B cell (primary cell): ENCODE measurements at regions of chrX and their contacts with region 1.

Region 1: GRCh38 chrX:23901805-23902204 is 5.9 kb downstream of the APOO start:
- DNase-seq: peak; percentile 70
- ATAC-seq: peak; percentile 78
- H3K4me3 ChIP-seq: no peak overlapping the region
- H3K4me3 Mint-ChIP-seq: no peak overlapping the region
- H3K27ac ChIP-seq: peak overlapping the region in 1 of 2 donors; percentile 14
- H3K27ac Mint-ChIP-seq: no peak overlapping the region
- H3K4me1 ChIP-seq: peaks cover 6 to 12% of the 10 kb centered on the region in 2 donors
- H3K4me1 Mint-ChIP-seq: peaks cover 6% of the 10 kb centered on the region
- H3K27me3 ChIP-seq: no peaks in the 10 kb centered on the region
- H3K27me3 Mint-ChIP-seq: no peaks in the 10 kb centered on the region
- CTCF ChIP-seq: no peak

Region 2: GRCh38 chrX:23667239-23668177 is 234.3 kb before region 1 on chrX and contains the start of gene PRDX4:
- CTCF ChIA-PET with region 1: interaction called, 12 read pairs
- POLR2A ChIA-PET with region 1: no interaction called
- intact Hi-C with region 1: loop called (anchors 10 kb)
- DNase-seq: peak; percentile 83
- ATAC-seq: peak; percentile 91
- H3K4me3 ChIP-seq: peak within 1 kb of the TSS; percentile 21 to 66 (median 64)
- H3K4me3 Mint-ChIP-seq: peak within 1 kb of the TSS; percentile 91
- H3K27ac ChIP-seq: peak within 1 kb of the TSS; percentile 77 to 82
- H3K27ac Mint-ChIP-seq: peak within 1 kb of the TSS; percentile 94
- H3K4me1 ChIP-seq: peaks cover 7 to 15% of the 10 kb centered on the region in 2 donors
- H3K4me1 Mint-ChIP-seq: peaks cover 20% of the 10 kb centered on the region
- H3K27me3 ChIP-seq: no peaks in the 10 kb centered on the region
- H3K27me3 Mint-ChIP-seq: no peaks in the 10 kb centered on the region
- CTCF ChIP-seq: no peak
- total RNA-seq, gene PRDX4: 10.6 and 12.8 TPM in 2 replicates

Region 3: DNA sequence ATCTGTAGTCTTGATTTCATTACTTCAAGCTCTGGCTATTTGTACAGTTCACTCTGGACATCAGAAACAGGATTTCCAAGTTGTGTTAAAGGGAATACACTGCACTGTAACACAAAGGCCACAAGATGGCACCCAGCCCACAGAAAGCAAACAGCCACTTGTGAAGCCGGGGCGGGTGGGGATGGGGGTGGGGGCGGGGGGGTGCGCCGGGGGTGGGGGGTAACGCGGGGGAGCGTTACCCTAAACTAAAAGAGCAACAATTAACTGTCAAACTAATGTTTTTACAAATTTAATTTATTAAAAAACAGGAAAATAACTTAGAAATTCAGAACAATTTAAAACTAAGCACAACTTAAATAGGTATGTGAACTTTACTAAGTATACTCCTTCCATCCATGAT is 207.2 kb before region 1 on chrX:
- CTCF ChIA-PET with region 1: interaction called, 91 read pairs
- POLR2A ChIA-PET with region 1: no interaction called
- intact Hi-C with region 1: no loop called
- DNase-seq: peak; percentile 56
- ATAC-seq: peak; percentile 56
- H3K4me3 ChIP-seq: no peak overlapping the region
- H3K4me3 Mint-ChIP-seq: no peak overlapping the region
- H3K27ac ChIP-seq: no peak overlapping the region
- H3K27ac Mint-ChIP-seq: no peak overlapping the region
- H3K4me1 ChIP-seq: no peaks in the 10 kb centered on the region
- H3K4me1 Mint-ChIP-seq: peaks cover 6% of the 10 kb centered on the region
- H3K27me3 ChIP-seq: no peaks in the 10 kb centered on the region
- H3K27me3 Mint-ChIP-seq: no peaks in the 10 kb centered on the region
- CTCF ChIP-seq: peak; percentile 65

Region 4: DNA sequence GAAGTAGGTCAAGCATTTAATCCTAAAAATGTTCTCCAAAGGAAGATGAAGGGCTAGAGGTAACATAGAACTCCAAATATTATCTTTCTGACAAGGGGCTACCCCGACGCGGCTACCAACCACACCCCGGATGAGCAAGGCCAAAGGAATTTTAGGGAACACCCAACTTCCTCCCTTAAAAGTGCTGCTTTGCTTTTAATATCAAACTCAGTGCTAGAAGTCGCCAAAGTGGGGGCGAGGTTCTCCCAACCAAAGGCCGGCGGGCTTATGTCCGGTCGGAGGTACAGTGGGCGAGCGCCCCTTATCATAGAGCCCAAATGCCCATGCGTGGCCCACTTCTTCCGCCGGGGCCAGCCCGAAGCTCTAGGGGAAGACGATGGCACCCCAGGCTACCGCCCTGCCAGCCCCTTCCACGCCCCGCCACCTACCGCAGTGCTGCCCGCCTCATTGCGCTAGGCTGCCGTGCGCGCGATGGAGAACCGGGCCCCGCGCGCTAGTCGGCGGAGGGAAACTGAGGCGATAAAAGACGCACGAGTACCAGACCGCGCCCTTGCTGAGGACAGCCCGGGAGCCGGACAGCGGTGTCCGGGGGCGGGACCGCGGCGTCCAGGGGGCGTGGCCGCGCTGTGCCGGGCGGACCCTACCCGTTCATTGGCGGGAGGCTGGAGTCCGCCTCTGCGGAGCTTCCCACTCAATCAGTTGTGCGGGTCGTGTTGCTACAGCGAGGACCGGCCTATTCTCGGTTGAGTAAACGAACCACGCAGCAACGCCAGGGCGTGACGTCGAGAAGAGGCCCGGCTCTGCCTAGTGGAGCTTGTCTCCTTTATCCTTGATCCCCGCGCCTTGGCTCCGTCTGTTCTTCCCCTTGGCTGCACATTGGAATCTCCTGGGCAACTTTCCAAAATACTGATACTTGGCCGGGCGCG is 158.8 kb before region 1 on chrX and contains the start of gene ACOT9:
- CTCF ChIA-PET with region 1: interaction called, 5 read pairs
- POLR2A ChIA-PET with region 1: no interaction called
- intact Hi-C with region 1: loop called (anchors 5 kb)
- DNase-seq: peak; percentile 86
- ATAC-seq: peak; percentile 95
- H3K4me3 ChIP-seq: peak within 1 kb of the TSS; percentile 36 to 80 (median 75)
- H3K4me3 Mint-ChIP-seq: peak within 1 kb of the TSS; percentile 91
- H3K27ac ChIP-seq: peak within 1 kb of the TSS; percentile 86 to 87
- H3K27ac Mint-ChIP-seq: peak within 1 kb of the TSS; percentile 90
- H3K4me1 ChIP-seq: peaks cover 3 to 12% of the 10 kb centered on the region in 2 donors
- H3K4me1 Mint-ChIP-seq: peaks cover 31% of the 10 kb centered on the region
- H3K27me3 ChIP-seq: no peaks in the 10 kb centered on the region
- H3K27me3 Mint-ChIP-seq: no peaks in the 10 kb centered on the region
- CTCF ChIP-seq: no peak
- total RNA-seq, gene ACOT9: 31.3 and 33.6 TPM in 2 replicates

Region 5: DNA sequence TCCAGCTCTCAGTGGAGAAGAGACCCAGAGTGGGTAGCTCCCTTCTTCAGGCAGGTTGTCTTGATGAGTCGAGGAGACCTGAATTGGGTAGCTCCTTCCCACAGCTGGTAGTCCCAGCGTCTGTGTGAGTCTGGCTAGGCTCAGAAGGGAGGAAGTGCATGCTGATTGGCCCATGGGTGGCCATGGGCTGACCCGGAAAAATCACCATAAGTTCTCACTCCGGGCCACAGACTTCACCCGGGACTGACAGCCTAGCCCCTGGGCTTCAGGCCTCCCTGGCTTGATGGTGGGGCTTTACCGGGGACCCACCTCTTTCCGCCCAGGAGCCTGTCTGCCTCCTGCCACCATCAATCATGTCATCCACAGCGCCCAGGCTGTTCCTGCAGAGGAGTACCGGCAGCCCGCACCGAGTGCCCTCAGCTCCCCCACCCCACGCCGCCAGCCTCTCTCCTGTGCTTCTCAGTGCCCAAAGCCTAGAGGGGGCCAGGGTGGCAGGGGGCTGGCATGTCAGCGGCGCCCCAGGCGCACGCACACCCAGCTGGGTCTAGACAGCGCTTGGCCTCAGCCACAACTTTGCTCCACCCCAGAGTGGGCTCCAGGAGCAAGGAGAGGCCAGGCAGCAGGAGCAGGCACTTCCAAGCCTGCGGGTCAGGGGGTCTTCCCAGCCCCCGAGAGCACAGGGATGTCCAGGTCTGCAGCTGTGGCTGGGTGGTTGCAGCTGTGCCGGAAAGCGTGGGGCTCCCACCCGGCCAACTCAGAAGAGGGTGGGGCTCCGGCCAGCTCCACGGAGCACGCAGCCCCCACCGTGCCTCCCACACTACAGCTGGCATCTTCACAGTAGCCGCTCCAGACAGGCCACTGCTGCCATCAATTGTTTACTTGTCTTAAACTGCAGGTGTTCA is 134.9 kb before region 1 on chrX:
- CTCF ChIA-PET with region 1: interaction called, 10 read pairs
- POLR2A ChIA-PET with region 1: no interaction called
- intact Hi-C with region 1: no loop called
- DNase-seq: peak; percentile 20
- ATAC-seq: peak; percentile 68
- H3K4me3 ChIP-seq: peak overlapping the region in 4 of 5 experiments; percentile 9 to 32 (median 22)
- H3K4me3 Mint-ChIP-seq: peak overlapping the region; percentile 66
- H3K27ac ChIP-seq: peak overlapping the region in 1 of 2 donors; percentile 18
- H3K27ac Mint-ChIP-seq: peak overlapping the region; percentile 70
- H3K4me1 ChIP-seq: no peaks in the 10 kb centered on the region
- H3K4me1 Mint-ChIP-seq: peaks cover 3% of the 10 kb centered on the region
- H3K27me3 ChIP-seq: no peaks in the 10 kb centered on the region
- H3K27me3 Mint-ChIP-seq: no peaks in the 10 kb centered on the region
- CTCF ChIP-seq: no peak

Region 6: DNA sequence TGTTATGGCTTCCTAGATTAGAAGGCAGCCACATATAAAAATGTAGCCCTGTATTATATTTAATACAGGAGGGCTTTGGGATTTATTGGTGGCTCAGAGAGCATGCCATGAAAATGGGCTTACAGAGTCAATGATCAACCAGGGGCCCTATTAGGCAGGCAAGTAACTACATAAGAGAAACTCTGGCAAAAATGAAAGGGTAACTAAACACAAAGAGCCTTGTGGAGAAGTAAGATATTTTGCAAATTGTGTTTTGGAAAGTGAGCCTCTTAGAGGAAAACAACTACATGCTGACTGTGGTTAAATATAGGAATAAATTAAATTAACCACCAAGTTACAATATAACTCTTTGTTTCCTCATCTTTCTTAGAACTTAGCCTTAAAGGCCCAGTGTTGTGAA is 113.3 kb before region 1 on chrX:
- CTCF ChIA-PET with region 1: interaction called, 64 read pairs
- POLR2A ChIA-PET with region 1: interaction called, 11 read pairs
- intact Hi-C with region 1: loop called (anchors 1 kb)
- DNase-seq: no peak
- ATAC-seq: no peak
- H3K4me3 ChIP-seq: no peak overlapping the region
- H3K4me3 Mint-ChIP-seq: no peak overlapping the region
- H3K27ac ChIP-seq: no peak overlapping the region
- H3K27ac Mint-ChIP-seq: no peak overlapping the region
- H3K4me1 ChIP-seq: peaks cover 8 to 14% of the 10 kb centered on the region in 2 donors
- H3K4me1 Mint-ChIP-seq: peaks cover 21% of the 10 kb centered on the region
- H3K27me3 ChIP-seq: no peaks in the 10 kb centered on the region
- H3K27me3 Mint-ChIP-seq: no peaks in the 10 kb centered on the region
- CTCF ChIP-seq: no peak

Region 7: DNA sequence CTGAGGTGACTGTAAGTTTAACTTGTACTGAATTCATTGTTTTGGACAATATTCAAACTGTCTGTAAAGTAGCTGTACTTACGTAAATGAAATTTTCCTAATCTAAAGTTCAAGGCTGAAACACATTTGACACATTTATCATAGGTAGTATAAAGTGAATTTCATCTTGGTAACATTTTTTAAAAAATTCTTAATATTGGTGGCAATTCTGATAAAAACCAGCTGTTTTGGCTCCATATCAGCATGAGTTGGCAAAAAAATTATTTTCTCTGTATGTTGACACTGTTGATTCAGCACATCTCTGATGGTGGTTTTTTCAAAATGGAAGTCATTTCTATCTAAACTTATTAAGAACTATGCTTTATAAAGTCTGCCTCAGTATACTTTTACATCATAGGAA is 36.9 kb after region 1 on chrX:
- CTCF ChIA-PET with region 1: no interaction called
- POLR2A ChIA-PET with region 1: no interaction called
- intact Hi-C with region 1: no loop called
- DNase-seq: no peak
- ATAC-seq: no peak
- H3K4me3 ChIP-seq: no peak overlapping the region
- H3K4me3 Mint-ChIP-seq: no peak overlapping the region
- H3K27ac ChIP-seq: no peak overlapping the region
- H3K27ac Mint-ChIP-seq: no peak overlapping the region
- H3K4me1 ChIP-seq: no peaks in the 10 kb centered on the region
- H3K4me1 Mint-ChIP-seq: no peaks in the 10 kb centered on the region
- H3K27me3 ChIP-seq: no peaks in the 10 kb centered on the region
- H3K27me3 Mint-ChIP-seq: no peaks in the 10 kb centered on the region
- CTCF ChIP-seq: no peak

Region 8: GRCh38 chrX:24054182-24055042 is 152.6 kb after region 1 on chrX and contains the start of gene EIF2S3:
- CTCF ChIA-PET with region 1: interaction called, 35 read pairs
- POLR2A ChIA-PET with region 1: interaction called, 5 read pairs
- intact Hi-C with region 1: no loop called
- DNase-seq: peak; percentile 95
- ATAC-seq: peak; percentile 80
- H3K4me3 ChIP-seq: peak within 1 kb of the TSS; percentile 76 to 98 (median 89)
- H3K4me3 Mint-ChIP-seq: peak within 1 kb of the TSS; percentile 99
- H3K27ac ChIP-seq: no peak within 1 kb of the TSS
- H3K27ac Mint-ChIP-seq: peak within 1 kb of the TSS; percentile 100
- H3K4me1 ChIP-seq: no peaks in the 10 kb centered on the region
- H3K4me1 Mint-ChIP-seq: peaks cover 3% of the 10 kb centered on the region
- H3K27me3 ChIP-seq: no peaks in the 10 kb centered on the region
- H3K27me3 Mint-ChIP-seq: no peaks in the 10 kb centered on the region
- CTCF ChIP-seq: peak; percentile 71
- total RNA-seq, gene EIF2S3: 260 and 272 TPM in 2 replicates